Testis (tissue), 5 donors: ENCODE measurements at regions of chr5 and their contacts with region 1.

Region 1: GRCh38 chr5:81751009-81751835 is at the start of gene SSBP2:
- DNase-seq: peak; percentile 99
- H3K4me3 ChIP-seq: peak within 1 kb of the TSS; percentile 83 to 85
- H3K27ac ChIP-seq: peak within 1 kb of the TSS; percentile 96 to 98
- H3K4me1 ChIP-seq: peaks cover 13% of the 10 kb centered on the region
- H3K27me3 ChIP-seq: no peaks in the 10 kb centered on the region
- CTCF ChIP-seq: no peak
- POLR2A ChIP-seq: peak; percentile 34
- total RNA-seq, gene SSBP2: 17.5 to 22.7 TPM

Region 2: DNA sequence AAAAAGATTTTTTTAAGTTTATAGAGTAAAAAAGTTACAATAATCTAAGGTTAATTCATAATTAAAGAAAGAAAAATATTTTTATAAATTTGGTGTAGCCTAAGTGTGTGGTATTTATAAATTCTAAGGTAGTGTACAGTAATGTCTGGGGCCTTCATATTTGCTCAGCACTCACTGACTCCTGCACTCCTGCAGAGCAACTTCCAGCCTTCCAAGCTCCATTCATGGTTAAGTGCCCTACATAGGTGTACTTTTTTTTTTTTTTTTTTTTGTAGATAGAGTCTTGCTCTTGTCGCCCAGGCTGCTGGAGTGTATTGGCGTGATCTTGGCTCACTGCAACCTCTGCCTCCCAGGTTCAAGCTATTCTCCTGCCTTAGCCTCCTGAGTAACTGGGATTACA is 367.4 kb before region 1 on chr5:
- intact Hi-C with region 1: no loop called
- DNase-seq: no peak
- H3K4me3 ChIP-seq: no peak overlapping the region
- H3K27ac ChIP-seq: no peak overlapping the region
- H3K4me1 ChIP-seq: no peaks in the 10 kb centered on the region
- H3K27me3 ChIP-seq: no peaks in the 10 kb centered on the region
- CTCF ChIP-seq: no peak
- POLR2A ChIP-seq: no peak

Region 3: GRCh38 chr5:81787474-81788242 is 36.4 kb after region 1 on chr5:
- intact Hi-C with region 1: loop called (anchors 5 kb)
- DNase-seq: peak; percentile 86
- H3K4me3 ChIP-seq: no peak overlapping the region
- H3K27ac ChIP-seq: no peak overlapping the region
- H3K4me1 ChIP-seq: peaks cover 12% of the 10 kb centered on the region
- H3K27me3 ChIP-seq: no peaks in the 10 kb centered on the region
- CTCF ChIP-seq: no peak
- POLR2A ChIP-seq: no peak

Region 4: DNA sequence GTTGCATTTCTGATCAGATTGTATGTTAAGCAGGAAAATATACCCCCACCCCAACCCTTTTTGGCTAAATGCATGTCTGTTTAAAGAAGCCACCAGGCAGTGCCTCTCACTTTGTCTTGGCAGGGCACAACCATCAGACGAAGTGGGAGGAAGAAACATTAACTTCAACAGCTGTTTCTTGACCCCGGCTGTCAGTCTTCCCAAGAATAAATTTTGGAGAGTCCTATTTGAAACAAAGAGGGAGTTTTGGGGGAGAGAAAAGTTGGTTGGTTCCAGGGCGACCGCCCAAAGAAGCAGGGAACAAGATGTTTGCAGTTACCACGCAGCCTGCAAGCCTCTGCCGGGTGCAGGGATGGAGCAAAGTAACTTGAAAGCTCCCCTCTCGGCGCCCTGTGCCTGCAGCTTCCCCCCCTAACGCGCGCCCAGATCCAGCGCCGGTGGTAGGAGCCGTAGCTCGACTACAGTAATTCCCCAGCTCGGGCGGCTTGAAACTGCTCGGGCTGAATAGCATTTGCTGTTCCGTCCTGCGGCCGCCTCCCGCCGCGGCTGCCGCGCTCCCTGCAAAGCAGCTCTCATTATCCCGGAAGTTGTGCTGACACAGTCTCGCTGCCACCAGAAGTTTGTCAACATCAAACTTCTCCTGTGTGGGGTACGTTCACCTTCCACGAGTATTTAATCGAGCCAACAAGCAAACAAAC is 100.4 kb after region 1 on chr5:
- intact Hi-C with region 1: loop called (anchors 1 kb)
- DNase-seq: peak; percentile 97
- H3K4me3 ChIP-seq: peak overlapping the region; percentile 45 to 60
- H3K27ac ChIP-seq: peak overlapping the region; percentile 49 to 75
- H3K4me1 ChIP-seq: peaks cover 14% of the 10 kb centered on the region
- H3K27me3 ChIP-seq: no peaks in the 10 kb centered on the region
- CTCF ChIP-seq: peak in 1 of 3 experiments; percentile 1
- POLR2A ChIP-seq: no peak